ENCODE measurements at regions of chr4 and their contacts with region 1.

Region 1: DNA sequence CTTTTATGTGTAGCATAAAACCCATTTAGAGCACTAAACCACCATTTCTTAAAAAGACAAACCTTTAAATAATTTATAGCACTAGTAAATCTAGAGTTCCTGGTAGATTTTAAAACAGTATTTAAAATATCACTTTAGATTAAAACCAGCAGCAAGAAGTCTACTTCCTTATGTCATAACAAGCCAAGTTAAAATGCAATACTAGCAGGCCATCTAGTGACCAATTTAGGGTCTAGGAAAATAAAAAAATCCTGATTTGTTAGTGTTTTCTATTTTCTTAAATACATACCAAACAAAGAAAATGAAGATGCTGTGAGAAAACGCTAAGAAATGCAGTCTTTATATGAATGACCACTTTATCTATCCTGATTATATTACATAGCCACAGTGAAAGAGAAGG is 53.9 kb downstream of the PAPSS1 start:
- DNase-seq: no peak
- H3K4me3 ChIP-seq: peak overlapping the region in 1 of 2 donors; percentile 31
- H3K27ac ChIP-seq: no peak overlapping the region
- H3K4me1 ChIP-seq: peaks cover 0 to 18% of the 10 kb centered on the region in 2 donors
- H3K27me3 ChIP-seq: no peaks in the 10 kb centered on the region
- CTCF ChIP-seq: peak in 2 of 3 experiments; percentile 36 to 55

Region 2: GRCh38 chr4:107037199-107037584 is 628.9 kb before region 1 on chr4:
- intact Hi-C with region 1: loop called (anchors 10 kb)
- DNase-seq: peak in 1 of 2 donors; percentile 68
- H3K4me3 ChIP-seq: peak overlapping the region; percentile 49 to 75
- H3K27ac ChIP-seq: no peak overlapping the region
- H3K4me1 ChIP-seq: no peaks in the 10 kb centered on the region
- H3K27me3 ChIP-seq: no peaks in the 10 kb centered on the region
- CTCF ChIP-seq: peak; percentile 25 to 65 (median 54)

Region 3: DNA sequence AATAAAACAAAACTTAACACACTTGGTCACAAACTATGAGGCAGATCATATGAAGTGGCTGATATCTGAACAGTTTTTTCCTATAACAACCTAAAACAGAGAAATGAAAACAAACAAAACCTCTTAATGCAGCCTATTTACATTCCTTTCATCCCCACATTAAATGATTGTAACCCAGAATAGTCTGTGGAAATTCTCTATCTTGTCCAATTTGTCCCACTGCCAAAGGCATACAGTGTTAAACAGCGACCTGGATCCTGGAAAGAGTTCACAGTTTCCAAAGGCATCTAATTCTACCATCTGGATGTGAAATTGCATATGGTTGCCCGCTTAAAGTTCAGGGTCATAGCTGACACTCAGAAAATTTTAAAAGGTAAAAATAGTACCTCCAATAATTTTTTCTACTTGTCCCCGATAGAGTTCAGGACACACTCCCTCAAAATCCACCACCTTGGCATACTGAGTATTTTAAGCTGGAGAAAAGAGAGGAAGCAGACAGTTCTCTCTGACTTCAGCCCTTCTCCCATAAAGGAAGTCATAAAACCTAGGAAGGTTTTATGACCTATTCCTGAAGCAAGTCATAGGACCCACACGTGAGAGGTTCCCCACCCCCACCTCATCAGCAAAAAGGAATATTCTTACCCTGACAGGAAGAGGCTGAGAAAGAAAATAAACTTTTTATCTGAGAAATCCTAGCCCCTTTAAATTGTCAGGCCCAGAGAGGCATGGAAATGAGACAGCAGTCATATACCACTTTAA is 216.3 kb before region 1 on chr4:
- intact Hi-C with region 1: loop called (anchors 10 kb)
- DNase-seq: no peak
- H3K4me3 ChIP-seq: no peak overlapping the region
- H3K27ac ChIP-seq: no peak overlapping the region
- H3K4me1 ChIP-seq: peaks cover 0 to 8% of the 10 kb centered on the region in 2 donors
- H3K27me3 ChIP-seq: no peaks in the 10 kb centered on the region
- CTCF ChIP-seq: no peak